HEK293 (cell line): ENCODE measurements at regions of chr7 and their contacts with region 1.

Region 1: DNA sequence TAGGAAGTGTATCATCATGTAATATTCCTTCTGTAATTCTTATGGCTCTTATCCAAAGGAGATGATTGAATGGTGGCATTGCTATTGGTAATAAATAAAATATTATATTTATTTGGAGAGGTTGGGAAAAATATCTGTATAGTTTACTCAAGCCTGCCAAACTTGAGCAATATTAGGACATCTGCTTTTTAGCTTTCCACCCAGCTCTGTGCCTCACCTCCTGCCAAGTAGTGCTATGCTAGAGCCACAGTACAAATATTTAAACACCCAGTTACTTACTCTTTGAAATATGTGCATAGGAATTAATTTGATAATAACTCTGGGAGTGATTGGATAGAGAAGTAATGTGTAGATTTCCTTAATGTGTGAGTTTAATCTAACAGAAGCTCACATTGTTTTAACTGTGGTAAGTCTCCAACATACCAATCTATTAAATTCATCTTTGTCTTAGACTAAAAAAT is 129.2 kb downstream of the BBS9 start:
- H3K4me3 ChIP-seq: no peak overlapping the region
- H3K27ac ChIP-seq: no peak overlapping the region
- H3K4me1 ChIP-seq: peaks cover 10% of the 10 kb centered on the region
- CTCF ChIP-seq: no peak

Region 2: GRCh38 chr7:33243319-33243881 is 15.1 kb before region 1 on chr7:
- CTCF ChIA-PET with region 1: interaction called, 15 read pairs
- POLR2A ChIA-PET with region 1: interaction called, 6 read pairs
- H3K4me3 ChIP-seq: no peak overlapping the region
- H3K27ac ChIP-seq: no peak overlapping the region
- H3K4me1 ChIP-seq: no peaks in the 10 kb centered on the region
- CTCF ChIP-seq: no peak